ENCODE measurements at regions of chr18 and their contacts with region 1.

Region 1: GRCh38 chr18:50356036-50356945 is 18.6 kb upstream of the SKA1 start:
- DNase-seq: no peak
- H3K4me3 ChIP-seq: no peak overlapping the region
- H3K4me3 Mint-ChIP-seq: peak overlapping the region in 1 of 8 donors; percentile 19
- H3K27ac ChIP-seq: no peak overlapping the region
- H3K27ac Mint-ChIP-seq: peak overlapping the region in 3 of 7 donors; percentile 53 to 81 (median 55)
- H3K4me1 ChIP-seq: no peaks in the 10 kb centered on the region
- H3K4me1 Mint-ChIP-seq: peaks cover 4 to 9% (median 7%) of the 10 kb centered on the region in 4 donors
- H3K27me3 ChIP-seq: no peaks in the 10 kb centered on the region
- H3K27me3 Mint-ChIP-seq: peaks cover 8 to 22% of the 10 kb centered on the region in 2 donors

Region 2: GRCh38 chr18:49510393-49511115 is 845.7 kb before region 1 on chr18:
- CTCF ChIA-PET with region 1: interaction called, 14 read pairs
- POLR2A ChIA-PET with region 1: no interaction called
- intact Hi-C with region 1: loop called (anchors 1 kb)
- DNase-seq: peak; percentile 46 to 60 (median 49)
- H3K4me3 ChIP-seq: no peak overlapping the region
- H3K4me3 Mint-ChIP-seq: no peak overlapping the region
- H3K27ac ChIP-seq: no peak overlapping the region
- H3K27ac Mint-ChIP-seq: no peak overlapping the region
- H3K4me1 ChIP-seq: no peaks in the 10 kb centered on the region
- H3K4me1 Mint-ChIP-seq: no peaks in the 10 kb centered on the region
- H3K27me3 ChIP-seq: no peaks in the 10 kb centered on the region
- H3K27me3 Mint-ChIP-seq: peaks cover 11 to 16% of the 10 kb centered on the region in 2 donors

Region 3: GRCh38 chr18:50057009-50057408 is 299.3 kb before region 1 on chr18:
- CTCF ChIA-PET with region 1: interaction called, 6 read pairs
- POLR2A ChIA-PET with region 1: no interaction called
- intact Hi-C with region 1: loop called (anchors 5 kb)
- DNase-seq: no peak
- H3K4me3 ChIP-seq: no peak overlapping the region
- H3K4me3 Mint-ChIP-seq: no peak overlapping the region
- H3K27ac ChIP-seq: no peak overlapping the region
- H3K27ac Mint-ChIP-seq: no peak overlapping the region
- H3K4me1 ChIP-seq: no peaks in the 10 kb centered on the region
- H3K4me1 Mint-ChIP-seq: no peaks in the 10 kb centered on the region
- H3K27me3 ChIP-seq: no peaks in the 10 kb centered on the region
- H3K27me3 Mint-ChIP-seq: peaks cover 7 to 8% of the 10 kb centered on the region in 2 donors

Region 4: GRCh38 chr18:50266248-50266704 is 90.0 kb before region 1 on chr18 and contains the start of gene CFAP53:
- CTCF ChIA-PET with region 1: interaction called, 42 read pairs
- POLR2A ChIA-PET with region 1: interaction called, 3 read pairs
- intact Hi-C with region 1: loop called (anchors 5 kb)
- DNase-seq: peak; percentile 73 to 83 (median 77)
- H3K4me3 ChIP-seq: peak within 1 kb of the TSS; percentile 58 to 63
- H3K4me3 Mint-ChIP-seq: peak within 1 kb of the TSS; percentile 83 to 97 (median 90)
- H3K27ac ChIP-seq: peak within 1 kb of the TSS; percentile 49
- H3K27ac Mint-ChIP-seq: peak within 1 kb of the TSS; percentile 81 to 93 (median 90)
- H3K4me1 ChIP-seq: peaks cover 15% of the 10 kb centered on the region
- H3K4me1 Mint-ChIP-seq: peaks cover 11 to 23% (median 18%) of the 10 kb centered on the region in 4 donors
- H3K27me3 ChIP-seq: no peaks in the 10 kb centered on the region
- H3K27me3 Mint-ChIP-seq: no peaks in the 10 kb centered on the region
- total RNA-seq, gene CFAP53: 1.4 to 1.6 TPM

Region 5: GRCh38 chr18:50307738-50308470 is 48.4 kb before region 1 on chr18:
- CTCF ChIA-PET with region 1: interaction called, 8 read pairs
- POLR2A ChIA-PET with region 1: no interaction called
- intact Hi-C with region 1: loop called (anchors 5 kb)
- DNase-seq: peak; percentile 85 to 93 (median 89)
- H3K4me3 ChIP-seq: peak overlapping the region; percentile 53 to 55
- H3K4me3 Mint-ChIP-seq: peak overlapping the region; percentile 91 to 97 (median 94)
- H3K27ac ChIP-seq: peak overlapping the region; percentile 7
- H3K27ac Mint-ChIP-seq: peak overlapping the region; percentile 61 to 94 (median 89)
- H3K4me1 ChIP-seq: peaks cover 15% of the 10 kb centered on the region
- H3K4me1 Mint-ChIP-seq: peaks cover 8 to 21% (median 14%) of the 10 kb centered on the region in 4 donors
- H3K27me3 ChIP-seq: no peaks in the 10 kb centered on the region
- H3K27me3 Mint-ChIP-seq: peaks cover 8 to 20% of the 10 kb centered on the region in 2 donors

Region 6: DNA sequence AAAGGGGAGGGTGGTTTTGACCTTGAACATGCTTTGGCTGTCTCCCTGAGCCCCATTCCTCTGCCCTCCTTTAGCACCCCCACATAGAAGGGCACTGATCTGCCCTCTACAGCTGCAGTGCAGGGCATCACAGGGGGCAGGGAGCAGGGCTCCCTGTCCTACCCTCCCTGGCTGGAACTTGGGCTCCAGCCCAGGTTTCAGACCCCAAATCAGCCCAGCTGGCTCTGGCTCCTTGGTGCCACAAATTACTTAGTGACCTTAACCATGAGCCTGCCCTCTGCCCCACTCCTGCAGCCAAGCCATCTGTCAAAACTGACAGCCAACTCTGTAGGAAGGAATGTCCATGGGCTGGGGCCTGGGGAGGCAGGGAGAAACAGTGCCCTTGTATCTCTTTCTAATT is 309.2 kb after region 1 on chr18:
- CTCF ChIA-PET with region 1: no interaction called
- POLR2A ChIA-PET with region 1: no interaction called
- intact Hi-C with region 1: no loop called
- DNase-seq: no peak
- H3K4me3 ChIP-seq: no peak overlapping the region
- H3K4me3 Mint-ChIP-seq: no peak overlapping the region
- H3K27ac ChIP-seq: no peak overlapping the region
- H3K27ac Mint-ChIP-seq: no peak overlapping the region
- H3K4me1 ChIP-seq: no peaks in the 10 kb centered on the region
- H3K4me1 Mint-ChIP-seq: no peaks in the 10 kb centered on the region
- H3K27me3 ChIP-seq: no peaks in the 10 kb centered on the region
- H3K27me3 Mint-ChIP-seq: peaks cover 2 to 3% of the 10 kb centered on the region in 2 donors